Activated naive CD4-positive, alpha-beta T cell treated with anti-CD3 and anti-CD28 coated beads, Interleukin-2, amount 10 ng/mL, durations not matched to agents 7 days and 5 days (primary cell): ENCODE measurements at regions of chr2 and their contacts with region 1.

Region 1: DNA sequence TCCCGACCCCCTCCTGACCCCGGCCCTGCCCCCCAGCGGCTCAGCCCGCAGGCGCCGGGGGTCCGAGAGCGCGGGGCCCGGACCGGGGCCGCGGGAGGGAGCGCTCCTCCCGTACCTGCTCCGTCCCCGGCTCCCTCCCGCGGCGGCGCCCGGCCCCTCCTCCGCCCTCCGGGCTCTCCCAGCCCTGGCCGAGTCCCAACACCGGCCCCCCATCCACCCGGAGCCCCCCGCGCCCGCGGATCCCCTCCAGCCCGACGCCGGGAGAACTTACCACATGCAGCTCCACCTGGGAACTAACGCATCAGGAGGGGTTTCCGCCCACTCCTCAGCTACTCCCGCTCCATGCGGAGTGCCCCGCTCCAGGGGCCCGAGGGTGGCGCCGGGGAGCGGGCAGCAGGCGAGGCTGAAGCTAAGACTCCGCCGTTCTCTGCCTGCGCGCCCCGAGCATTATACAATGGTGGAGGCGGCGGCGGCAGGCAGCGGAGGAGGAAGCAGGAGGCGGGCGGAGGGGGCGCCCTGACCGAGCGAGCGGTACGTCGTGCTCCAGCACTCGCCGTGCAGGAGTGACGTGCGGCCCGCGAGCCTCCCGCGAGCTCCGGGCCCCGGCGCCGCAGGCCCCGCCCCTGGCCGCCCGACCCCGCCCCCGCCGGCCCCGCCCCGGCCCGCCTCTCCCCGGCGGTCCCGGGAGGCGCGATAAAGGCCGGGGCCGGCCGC is at the start of gene SERTAD2:
- DNase-seq: peak; percentile 91
- H3K4me3 Mint-ChIP-seq: peak within 1 kb of the TSS; percentile 82
- H3K27ac Mint-ChIP-seq: peak within 1 kb of the TSS; percentile 87
- H3K4me1 Mint-ChIP-seq: peaks cover 59% of the 10 kb centered on the region
- H3K27me3 Mint-ChIP-seq: peaks cover 9% of the 10 kb centered on the region

Region 2: DNA sequence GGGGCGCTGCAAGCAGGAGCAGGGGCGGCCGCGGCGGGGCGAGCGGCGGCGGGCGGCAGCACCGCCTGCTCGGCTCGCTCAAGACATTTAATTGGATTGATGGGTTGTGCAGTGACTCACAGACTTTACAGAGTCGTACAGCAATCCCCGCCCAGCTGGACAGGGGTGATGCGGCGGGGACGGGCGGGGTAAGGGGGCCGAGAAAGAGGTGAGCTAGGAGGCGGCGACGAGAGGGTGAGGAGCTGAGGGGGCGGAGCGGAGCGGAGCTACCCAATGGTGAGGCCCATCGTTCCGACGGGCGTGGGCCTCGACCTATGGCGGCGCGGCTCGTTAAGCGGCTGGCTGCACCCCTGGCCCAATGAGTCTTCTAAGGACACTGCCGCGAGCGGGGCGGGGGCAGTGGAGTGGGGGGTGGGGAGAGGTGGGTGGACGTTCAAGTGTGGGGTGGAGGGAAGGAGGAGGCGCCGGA is 97.3 kb after region 1 on chr2:
- CTCF ChIA-PET with region 1: interaction called, 26 read pairs
- DNase-seq: peak; percentile 98
- H3K4me3 Mint-ChIP-seq: peak overlapping the region; percentile 82
- H3K27ac Mint-ChIP-seq: peak overlapping the region; percentile 89
- H3K4me1 Mint-ChIP-seq: peaks cover 26% of the 10 kb centered on the region
- H3K27me3 Mint-ChIP-seq: peaks cover 3% of the 10 kb centered on the region

Region 3: DNA sequence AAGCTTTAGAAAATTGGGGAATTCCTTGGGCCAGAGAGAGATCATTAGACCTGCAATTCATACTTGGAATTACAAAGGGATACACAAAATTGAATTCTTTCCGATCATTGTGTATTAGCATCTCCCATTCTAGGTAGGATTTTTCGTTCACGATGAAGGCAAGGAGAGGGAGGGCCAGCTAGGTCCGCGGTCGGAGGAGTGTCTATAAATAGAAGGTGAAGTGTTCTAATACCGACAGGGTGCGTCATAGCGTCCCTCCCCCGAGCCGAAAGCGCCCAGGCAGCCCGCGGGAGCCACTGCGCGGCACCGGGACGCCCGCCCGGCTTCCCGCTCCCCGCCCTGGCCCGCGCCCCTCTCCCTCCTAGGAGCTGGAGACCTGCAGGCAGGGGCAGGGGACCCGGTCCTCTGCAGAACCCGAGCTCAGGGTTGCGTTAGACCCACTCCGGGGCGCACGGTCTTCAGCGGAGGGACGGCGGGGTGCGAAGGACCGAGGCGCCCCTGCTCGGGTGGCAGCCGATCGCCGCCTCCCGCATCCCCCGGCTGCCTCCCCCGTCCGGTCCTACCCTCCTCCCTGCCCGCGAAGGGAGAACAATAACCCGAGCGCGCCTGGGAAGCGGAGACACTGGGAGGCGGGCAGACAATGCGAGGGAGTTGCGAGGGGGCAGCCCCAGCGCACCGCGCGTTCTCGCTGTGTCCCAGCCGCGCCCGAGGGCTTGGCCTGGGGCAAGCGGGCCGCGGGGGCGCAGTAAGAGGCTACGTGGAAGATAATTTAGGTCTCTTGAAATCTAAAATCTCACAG is 114.4 kb after region 1 on chr2:
- CTCF ChIA-PET with region 1: interaction called, 20 read pairs
- DNase-seq: peak; percentile 84
- H3K4me3 Mint-ChIP-seq: peak overlapping the region; percentile 84
- H3K27ac Mint-ChIP-seq: peak overlapping the region; percentile 93
- H3K4me1 Mint-ChIP-seq: peaks cover 31% of the 10 kb centered on the region
- H3K27me3 Mint-ChIP-seq: peaks cover 25% of the 10 kb centered on the region